Activated B cell treated with CpG ODN at 0.5 μM for 24 hours (primary cell): ENCODE measurements at regions of chr20 and their contacts with region 1.

Region 1: DNA sequence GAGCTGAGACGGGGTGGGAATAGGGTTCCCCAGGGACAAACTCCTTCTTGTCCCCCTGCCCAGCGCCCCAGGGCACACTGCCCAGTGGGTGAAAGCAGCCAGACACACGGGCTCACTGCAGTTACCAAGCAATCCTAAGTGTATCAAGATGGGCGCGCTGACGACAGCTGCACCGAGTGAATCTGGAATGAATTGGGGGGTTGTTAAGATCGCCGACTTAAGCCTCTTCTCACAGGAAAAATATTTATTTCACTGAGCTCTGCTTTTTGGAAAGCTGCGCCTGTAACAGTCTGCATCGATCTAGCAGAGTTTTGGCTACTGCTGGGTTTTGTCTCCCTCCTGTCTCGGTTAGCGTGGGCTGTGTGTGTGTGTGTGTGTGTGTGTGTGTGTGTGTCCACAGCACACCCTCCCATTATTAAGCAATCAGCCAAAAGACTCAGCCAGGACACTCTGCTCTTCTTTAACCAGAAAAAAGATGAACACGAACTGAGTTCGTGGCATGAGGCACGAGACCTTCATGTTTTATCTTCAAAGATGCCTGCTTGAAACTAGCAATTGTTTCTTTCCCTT is 35.9 kb downstream of the RIPOR3 start:
- DNase-seq: no peak
- ATAC-seq: no peak
- H3K4me3 Mint-ChIP-seq: no peak overlapping the region
- H3K27ac Mint-ChIP-seq: no peak overlapping the region
- H3K4me1 Mint-ChIP-seq: no peaks in the 10 kb centered on the region
- H3K27me3 Mint-ChIP-seq: peaks cover 9% of the 10 kb centered on the region
- CTCF ChIP-seq: no peak

Region 2: DNA sequence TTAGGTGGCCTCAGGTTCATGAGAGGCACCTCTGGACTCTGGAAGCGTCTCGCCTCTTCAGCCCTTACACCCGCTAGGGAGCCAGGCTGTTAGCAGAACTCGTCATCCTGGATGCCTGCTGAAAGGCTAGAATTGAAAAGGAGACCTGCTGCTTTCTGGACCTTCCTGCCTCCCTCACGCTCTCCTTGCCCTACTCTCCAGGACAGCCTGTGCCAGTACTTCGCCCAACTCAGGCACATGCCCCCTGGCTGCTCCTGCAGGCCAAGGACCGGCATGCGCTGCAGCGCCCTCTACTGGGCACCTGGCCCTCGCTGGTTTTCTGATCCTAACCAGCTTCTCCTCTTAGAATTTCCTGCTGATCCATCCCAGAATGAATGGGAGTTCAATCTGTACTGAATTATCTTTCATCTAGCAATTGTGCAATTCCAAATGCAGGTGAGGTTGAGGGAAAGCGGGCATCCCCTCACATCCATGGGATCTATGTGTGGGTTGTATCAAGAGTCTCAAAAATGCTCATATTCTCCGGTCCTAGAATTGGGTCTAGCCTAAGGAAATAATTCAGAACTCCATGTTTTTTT is 67.3 kb before region 1 on chr20:
- CTCF ChIA-PET with region 1: no interaction called
- POLR2A ChIA-PET with region 1: no interaction called
- intact Hi-C with region 1: no loop called
- DNase-seq: peak; percentile 63
- ATAC-seq: peak; percentile 64
- H3K4me3 Mint-ChIP-seq: no peak overlapping the region
- H3K27ac Mint-ChIP-seq: peak overlapping the region; percentile 54
- H3K4me1 Mint-ChIP-seq: peaks cover 13% of the 10 kb centered on the region
- H3K27me3 Mint-ChIP-seq: no peaks in the 10 kb centered on the region
- CTCF ChIP-seq: peak; percentile 64

Region 3: DNA sequence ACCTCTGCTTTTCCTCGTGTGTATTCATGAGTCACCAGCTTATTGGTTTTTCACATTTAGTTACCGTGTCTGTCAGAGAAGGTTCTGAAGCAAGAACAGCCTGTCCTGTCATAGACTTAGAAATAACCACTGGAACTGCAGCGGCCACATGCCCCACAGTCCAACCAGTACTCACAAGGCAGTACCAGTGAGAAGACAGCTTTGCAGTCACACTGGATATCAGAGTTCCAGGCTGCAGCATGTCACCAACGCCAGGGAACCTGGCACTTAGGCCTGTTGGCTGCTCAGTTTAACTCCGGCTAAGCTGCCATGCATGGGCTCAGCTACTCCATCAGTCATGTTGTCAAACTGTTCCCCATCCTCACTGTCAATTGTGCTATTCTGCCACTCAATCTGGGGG is 235.7 kb after region 1 on chr20:
- CTCF ChIA-PET with region 1: no interaction called
- POLR2A ChIA-PET with region 1: interaction called, 11 read pairs
- intact Hi-C with region 1: no loop called
- DNase-seq: no peak
- ATAC-seq: no peak
- H3K4me3 Mint-ChIP-seq: no peak overlapping the region
- H3K27ac Mint-ChIP-seq: no peak overlapping the region
- H3K4me1 Mint-ChIP-seq: peaks cover 17% of the 10 kb centered on the region
- H3K27me3 Mint-ChIP-seq: no peaks in the 10 kb centered on the region
- CTCF ChIP-seq: no peak